Spleen (tissue), 13 donors: ENCODE measurements at regions of chr4 and their contacts with region 1.

Region 1: GRCh38 chr4:99894161-99894997 is at the start of gene LAMTOR3:
- DNase-seq: peak; percentile 97
- H3K4me3 ChIP-seq: peak within 1 kb of the TSS; percentile 66 to 87 (median 78)
- H3K27ac ChIP-seq: peak within 1 kb of the TSS; percentile 44 to 94 (median 86)
- H3K4me1 ChIP-seq: peaks cover 11 to 57% (median 45%) of the 10 kb centered on the region in 6 donors
- H3K27me3 ChIP-seq: no peaks in the 10 kb centered on the region
- CTCF ChIP-seq: peak in 1 of 11 experiments; percentile 13
- POLR2A ChIP-seq: no peak
- total RNA-seq, gene LAMTOR3: 22.4 to 50.1 (median 34.8) TPM

Region 2: GRCh38 chr4:99816545-99817308 is 77.7 kb before region 1 on chr4 and contains the start of gene DAPP1:
- intact Hi-C with region 1: loop called (anchors 10 kb)
- DNase-seq: peak; percentile 93
- H3K4me3 ChIP-seq: peak within 1 kb of the TSS; percentile 40 to 81 (median 51)
- H3K27ac ChIP-seq: peak within 1 kb of the TSS; percentile 70 to 91 (median 86)
- H3K4me1 ChIP-seq: peaks cover 18 to 67% (median 53%) of the 10 kb centered on the region in 6 donors
- H3K27me3 ChIP-seq: no peaks in the 10 kb centered on the region
- CTCF ChIP-seq: no peak
- POLR2A ChIP-seq: peak; percentile 75 to 91 (median 80)
- total RNA-seq, gene DAPP1: 32.2 to 49.4 (median 40.3) TPM

Region 3: DNA sequence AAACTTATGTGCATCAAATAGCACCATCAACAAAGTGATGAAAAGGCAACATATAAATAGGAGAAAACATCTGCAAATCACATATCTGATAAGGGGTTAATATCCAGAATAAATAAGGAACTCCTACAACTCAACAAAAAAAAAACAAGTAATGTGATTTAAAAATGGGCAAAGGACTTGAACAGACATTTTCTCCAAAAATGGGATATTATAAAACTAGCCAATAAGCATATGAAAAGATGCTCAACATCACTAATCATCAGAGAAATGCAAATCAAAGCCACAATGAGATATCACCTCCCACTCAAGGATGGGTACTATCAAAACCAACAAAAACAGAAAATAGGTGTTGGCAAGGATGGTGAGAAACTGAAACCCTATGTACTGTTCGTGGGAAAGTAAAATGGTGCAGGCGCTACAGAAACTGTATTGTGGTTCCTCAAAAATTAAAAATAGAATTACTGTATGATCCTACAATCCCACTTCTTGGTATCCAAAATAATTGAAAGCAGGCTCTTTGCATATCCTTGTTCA is 49.6 kb after region 1 on chr4:
- intact Hi-C with region 1: loop called (anchors 5 kb)
- DNase-seq: no peak
- H3K4me3 ChIP-seq: peak overlapping the region in 1 of 8 donors; percentile 97
- H3K27ac ChIP-seq: no peak overlapping the region
- H3K4me1 ChIP-seq: peaks cover 50 to 96% (median 71%) of the 10 kb centered on the region in 6 donors
- H3K27me3 ChIP-seq: no peaks in the 10 kb centered on the region
- CTCF ChIP-seq: no peak
- POLR2A ChIP-seq: no peak